K562 (cell line): ENCODE measurements at regions of chr2 and their contacts with region 1.

Region 1: DNA sequence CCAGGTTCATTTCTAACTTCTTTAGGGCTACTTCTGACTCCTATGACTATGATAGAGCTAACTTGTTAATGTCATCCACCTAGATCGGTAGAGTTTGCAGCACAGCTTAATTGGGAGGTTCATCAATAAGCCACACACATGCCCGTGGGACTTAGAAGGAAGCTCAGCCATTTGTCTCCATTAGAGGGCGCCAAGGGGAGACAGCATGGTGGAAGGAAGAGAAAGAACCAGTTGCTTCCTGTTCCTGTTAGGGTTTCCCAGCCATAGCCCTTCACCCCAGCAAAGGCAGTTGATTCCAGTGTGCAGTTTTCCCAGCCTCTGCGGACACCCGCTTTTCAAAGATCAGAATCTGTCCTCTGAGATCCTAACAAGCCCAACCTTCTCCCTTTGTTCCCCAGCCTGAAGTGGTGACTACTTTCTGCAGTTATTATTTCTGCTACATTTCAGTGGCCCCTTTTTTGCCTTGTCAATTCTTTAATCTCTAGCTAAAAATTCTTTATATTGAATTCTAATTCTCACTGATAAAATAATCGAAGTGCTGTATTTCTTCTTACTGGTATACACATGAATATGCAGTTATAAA is 30.3 kb downstream of the MAIP1 start:
- DNase-seq: peak; percentile 44 to 77 (median 52)
- ATAC-seq: peak; percentile 95
- H3K4me3 ChIP-seq: no peak overlapping the region
- H3K27ac ChIP-seq: no peak overlapping the region
- H3K4me1 ChIP-seq: peaks cover 0 to 11% of the 10 kb centered on the region in 2 experiments; a peak in 2 of 5 replicates
- H3K27me3 ChIP-seq: no peaks in the 10 kb centered on the region
- CTCF ChIP-seq: peak; percentile 64 to 74 (median 64)
- EP300 ChIP-seq: no peak
- POLR2A ChIP-seq: no peak
- RAD21 ChIP-seq: peak; percentile 64 to 72

Region 2: GRCh38 chr2:199392363-199392762 is 593.4 kb before region 1 on chr2:
- CTCF ChIA-PET with region 1: no interaction called
- POLR2A ChIA-PET with region 1: no interaction called
- in situ Hi-C with region 1: no loop called
- intact Hi-C with region 1: no loop called
- DNase-seq: no peak
- ATAC-seq: no peak
- H3K4me3 ChIP-seq: no peak overlapping the region
- H3K27ac ChIP-seq: no peak overlapping the region
- H3K4me1 ChIP-seq: no peaks in the 10 kb centered on the region; a peak in 1 of 5 replicates
- H3K27me3 ChIP-seq: no peaks in the 10 kb centered on the region
- CTCF ChIP-seq: no peak
- EP300 ChIP-seq: no peak
- POLR2A ChIP-seq: no peak
- RAD21 ChIP-seq: no peak

Region 3: DNA sequence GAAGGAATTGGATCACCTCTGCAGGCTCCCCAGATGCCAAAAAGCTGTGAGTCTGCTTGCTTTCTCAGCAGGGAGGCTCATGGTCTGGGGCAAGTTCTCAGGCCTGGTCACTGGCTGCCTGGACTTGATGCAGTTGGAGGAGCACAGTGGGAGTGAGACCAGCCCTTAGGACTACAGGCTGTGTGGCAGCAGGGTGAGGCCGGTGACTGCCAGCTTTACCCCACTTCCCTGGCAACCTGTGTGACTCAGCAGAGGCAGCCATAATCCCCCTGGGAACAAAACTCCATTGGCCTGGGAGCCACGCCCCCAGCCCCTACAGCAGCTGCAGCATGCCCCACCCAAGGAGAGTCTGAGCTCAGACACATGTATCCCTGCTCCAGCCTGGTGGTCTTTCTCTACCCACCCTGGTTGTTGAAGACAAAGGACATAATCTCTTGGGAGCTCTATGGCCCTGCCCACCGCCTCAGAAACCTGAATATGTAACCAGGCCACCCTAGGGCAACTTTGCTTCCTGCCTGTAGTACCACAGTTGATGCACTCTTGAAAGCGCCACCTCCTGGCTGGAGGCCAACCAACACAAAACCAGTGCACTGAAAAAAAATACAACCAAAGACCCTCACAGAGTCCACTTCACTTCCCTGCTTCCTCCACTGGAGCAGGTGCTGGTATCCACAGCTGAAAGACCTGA is 214.0 kb after region 1 on chr2:
- CTCF ChIA-PET with region 1: no interaction called
- POLR2A ChIA-PET with region 1: interaction called, 3 read pairs
- in situ Hi-C with region 1: no loop called
- intact Hi-C with region 1: loop called (anchors 10 kb)
- DNase-seq: peak in 1 of 4 experiments; percentile 6
- ATAC-seq: no peak
- H3K4me3 ChIP-seq: no peak overlapping the region
- H3K27ac ChIP-seq: no peak overlapping the region
- H3K4me1 ChIP-seq: no peaks in the 10 kb centered on the region; a peak in 1 of 5 replicates
- H3K27me3 ChIP-seq: no peaks in the 10 kb centered on the region; a peak in 1 of 5 replicates
- CTCF ChIP-seq: peak in 2 of 3 experiments; percentile 25 to 27; a peak in 2 of 6 replicates
- EP300 ChIP-seq: no peak
- POLR2A ChIP-seq: no peak
- RAD21 ChIP-seq: no peak

Region 4: DNA sequence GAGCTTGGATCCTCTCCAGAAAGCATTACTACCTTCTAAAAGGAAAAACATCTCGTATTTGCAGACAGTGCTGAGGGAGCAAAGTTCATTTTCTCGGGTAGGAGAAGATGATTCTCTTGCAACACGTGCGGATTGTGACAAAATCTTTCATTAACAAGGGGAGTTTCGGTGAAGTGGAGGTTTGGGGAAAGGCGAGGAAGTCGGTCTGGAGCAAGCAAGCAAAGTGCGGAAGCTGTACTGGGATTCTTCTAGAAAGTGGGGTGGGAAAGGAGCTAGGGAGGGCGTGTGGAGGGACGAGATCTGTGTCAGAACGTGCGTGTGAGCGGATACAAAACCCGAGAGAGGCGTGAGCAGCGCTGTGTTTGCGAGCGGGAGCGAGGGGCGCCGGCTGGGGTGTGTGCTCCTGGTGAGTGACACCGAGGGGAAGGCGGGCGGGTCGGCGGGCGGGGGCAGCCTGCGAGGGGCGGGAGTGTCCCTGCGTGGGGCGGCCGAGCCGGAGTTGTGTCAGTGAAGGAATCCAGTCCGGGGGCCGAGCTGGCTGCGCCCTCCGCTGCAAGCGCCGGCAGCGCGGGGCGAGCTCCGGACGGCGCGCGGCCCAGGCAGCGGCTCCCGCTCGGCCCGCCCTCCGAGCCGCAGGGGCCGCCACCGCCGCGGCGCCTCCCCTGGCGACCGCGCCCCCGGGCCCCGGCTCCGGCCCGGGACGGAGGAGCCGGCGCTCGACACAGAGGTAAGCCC is 320.6 kb after region 1 on chr2 and contains the start of gene SPATS2L:
- CTCF ChIA-PET with region 1: no interaction called
- POLR2A ChIA-PET with region 1: no interaction called
- in situ Hi-C with region 1: no loop called
- intact Hi-C with region 1: loop called (anchors 5 kb)
- DNase-seq: peak; percentile 59 to 63 (median 61)
- ATAC-seq: peak; percentile 84
- H3K4me3 ChIP-seq: peak within 1 kb of the TSS; percentile 65
- H3K27ac ChIP-seq: peak within 1 kb of the TSS; percentile 66; the same call in 2 of the 3 replicates
- H3K4me1 ChIP-seq: peaks cover 0 to 8% of the 10 kb centered on the region in 2 experiments; a peak in 3 of 5 replicates
- H3K27me3 ChIP-seq: no peaks in the 10 kb centered on the region
- CTCF ChIP-seq: no peak
- EP300 ChIP-seq: no peak
- POLR2A ChIP-seq: 0 out of 2 replicates have a peak, but pooled peaks have one; percentile 31
- RAD21 ChIP-seq: no peak
- polyA plus RNA-seq, gene SPATS2L: 11.3 to 11.6 TPM

Region 5: DNA sequence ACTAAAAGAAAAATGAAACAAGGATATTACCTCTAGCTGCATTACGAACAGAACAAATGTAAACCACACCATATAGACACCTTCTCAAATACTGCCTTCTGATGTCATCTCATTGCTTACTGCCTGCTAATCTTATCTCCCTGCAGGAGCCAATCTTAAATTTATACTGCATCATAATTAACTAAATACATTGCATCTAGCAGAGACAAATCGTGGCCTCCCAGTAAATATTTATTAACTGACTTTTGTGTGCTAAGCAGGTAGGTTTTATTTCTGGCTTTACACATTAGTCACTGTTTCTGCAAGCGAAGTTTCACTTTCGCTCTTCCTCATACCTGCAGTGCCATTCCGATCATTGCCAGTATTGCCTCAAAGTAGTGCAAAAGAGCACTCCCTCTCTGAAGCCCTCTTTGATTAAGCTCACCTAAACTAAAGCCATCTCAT is 388.3 kb after region 1 on chr2:
- CTCF ChIA-PET with region 1: no interaction called
- POLR2A ChIA-PET with region 1: interaction called, 3 read pairs
- in situ Hi-C with region 1: no loop called
- intact Hi-C with region 1: loop called (anchors 10 kb)
- DNase-seq: no peak
- ATAC-seq: no peak
- H3K4me3 ChIP-seq: no peak overlapping the region
- H3K27ac ChIP-seq: 0 out of 3 replicates have a peak overlapping the region, but pooled peaks have one; percentile 15
- H3K4me1 ChIP-seq: peaks cover 2 to 54% of the 10 kb centered on the region in 2 experiments; a peak in 4 of 5 replicates
- H3K27me3 ChIP-seq: no peaks in the 10 kb centered on the region
- CTCF ChIP-seq: no peak
- EP300 ChIP-seq: no peak
- POLR2A ChIP-seq: no peak
- RAD21 ChIP-seq: no peak

Region 6: DNA sequence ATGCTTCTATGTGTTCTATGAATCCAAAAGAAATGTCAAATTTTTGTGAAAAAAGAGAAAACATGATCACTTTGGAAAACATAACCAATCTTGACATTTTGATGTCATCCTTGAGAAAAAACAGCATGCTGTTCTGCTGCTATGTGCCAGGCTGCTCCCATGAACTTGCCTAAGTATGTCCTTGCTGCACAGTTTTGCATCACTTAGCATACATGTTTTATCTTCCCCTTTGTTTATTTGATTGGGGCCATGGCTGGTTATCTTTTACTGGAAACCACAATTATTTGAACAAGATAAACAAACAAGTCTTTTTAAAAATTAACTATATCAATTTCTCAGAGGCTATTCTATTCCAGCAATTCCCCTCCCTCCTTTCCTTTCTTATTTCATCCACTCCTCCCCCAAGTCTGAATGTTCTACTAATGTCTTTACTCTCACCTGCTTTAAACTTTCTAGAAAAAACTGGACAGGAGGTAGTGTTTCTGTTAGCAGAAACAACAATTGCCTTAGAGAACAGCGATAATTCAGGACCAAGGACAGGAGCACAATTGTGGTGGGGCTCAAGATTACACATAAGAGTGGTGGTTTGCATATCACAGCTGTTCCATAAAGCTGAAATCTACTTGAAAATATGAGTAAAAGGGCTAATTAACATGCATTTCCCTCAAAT is 606.8 kb after region 1 on chr2:
- CTCF ChIA-PET with region 1: no interaction called
- POLR2A ChIA-PET with region 1: no interaction called
- in situ Hi-C with region 1: no loop called
- intact Hi-C with region 1: loop called (anchors 10 kb)
- DNase-seq: no peak
- ATAC-seq: no peak
- H3K4me3 ChIP-seq: no peak overlapping the region
- H3K27ac ChIP-seq: no peak overlapping the region
- H3K4me1 ChIP-seq: no peaks in the 10 kb centered on the region
- H3K27me3 ChIP-seq: no peaks in the 10 kb centered on the region; a peak in 1 of 5 replicates
- CTCF ChIP-seq: no peak
- EP300 ChIP-seq: no peak
- POLR2A ChIP-seq: no peak
- RAD21 ChIP-seq: no peak